HEK293 (cell line): ENCODE measurements at regions of chr3 and their contacts with region 1.

Region 1: GRCh38 chr3:72847751-72848702 is at the start of gene SHQ1:
- H3K4me3 ChIP-seq: peak within 1 kb of the TSS; percentile 95
- H3K27ac ChIP-seq: no peak within 1 kb of the TSS; the same call in 1 of the 2 replicates
- H3K4me1 ChIP-seq: no peaks in the 10 kb centered on the region
- CTCF ChIP-seq: no peak

Region 2: GRCh38 chr3:72887705-72888545 is 39.9 kb after region 1 on chr3 and contains the start of gene GXYLT2:
- CTCF ChIA-PET with region 1: interaction called, 12 read pairs
- POLR2A ChIA-PET with region 1: no interaction called
- H3K4me3 ChIP-seq: peak within 1 kb of the TSS; percentile 55
- H3K27ac ChIP-seq: peak within 1 kb of the TSS; percentile 70; the same call in 1 of the 2 replicates
- H3K4me1 ChIP-seq: peaks cover 16% of the 10 kb centered on the region
- CTCF ChIP-seq: no peak

Region 3: DNA sequence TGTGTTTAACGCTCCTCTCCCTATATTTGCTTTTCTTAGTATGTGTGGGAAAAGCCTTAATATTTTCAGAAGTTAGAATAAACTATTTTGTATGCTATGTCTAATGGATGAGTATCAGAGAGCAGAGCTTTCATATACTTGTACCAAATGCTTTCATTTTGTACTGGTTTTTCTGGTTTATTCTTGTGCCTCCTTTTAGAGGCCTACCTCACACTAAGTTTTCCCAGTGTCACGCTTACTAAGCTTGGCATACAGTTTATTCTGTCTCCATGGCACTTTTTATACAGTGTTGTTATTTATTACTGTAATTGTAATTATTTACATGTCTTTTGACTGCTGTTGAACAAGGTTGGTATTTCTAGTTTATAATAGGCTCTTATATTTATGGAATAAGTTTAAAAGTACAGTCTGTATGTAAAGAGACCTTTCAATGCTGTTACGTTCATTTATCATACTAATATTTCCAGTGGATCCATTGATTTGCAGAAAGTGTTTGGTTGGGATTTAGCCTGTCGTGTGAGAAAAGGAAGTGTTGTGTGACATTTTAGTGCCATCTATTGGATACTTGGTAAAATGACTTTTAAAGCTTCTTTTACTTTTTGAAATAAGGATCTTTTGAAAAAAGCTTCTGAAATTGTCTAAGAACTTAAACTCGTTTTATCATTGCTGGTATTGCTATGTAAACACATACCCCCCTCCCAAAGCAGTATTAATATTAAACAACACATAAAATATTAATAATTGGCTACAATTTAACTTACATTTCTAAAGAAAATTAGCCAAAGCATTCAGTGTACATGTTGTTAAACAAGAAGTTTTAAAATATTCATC is 208.2 kb after region 1 on chr3:
- CTCF ChIA-PET with region 1: interaction called, 13 read pairs
- POLR2A ChIA-PET with region 1: no interaction called
- H3K4me3 ChIP-seq: no peak overlapping the region
- H3K27ac ChIP-seq: no peak overlapping the region
- H3K4me1 ChIP-seq: no peaks in the 10 kb centered on the region
- CTCF ChIP-seq: no peak

Region 4: GRCh38 chr3:73086071-73086494 is 238.1 kb after region 1 on chr3:
- CTCF ChIA-PET with region 1: interaction called, 17 read pairs
- POLR2A ChIA-PET with region 1: no interaction called
- H3K4me3 ChIP-seq: no peak overlapping the region
- H3K27ac ChIP-seq: no peak overlapping the region
- H3K4me1 ChIP-seq: no peaks in the 10 kb centered on the region
- CTCF ChIP-seq: peak; percentile 39; the same call in 1 of the 2 replicates